IMR-90 (cell line): ENCODE measurements at regions of chr3 and their contacts with region 1.

Region 1: DNA sequence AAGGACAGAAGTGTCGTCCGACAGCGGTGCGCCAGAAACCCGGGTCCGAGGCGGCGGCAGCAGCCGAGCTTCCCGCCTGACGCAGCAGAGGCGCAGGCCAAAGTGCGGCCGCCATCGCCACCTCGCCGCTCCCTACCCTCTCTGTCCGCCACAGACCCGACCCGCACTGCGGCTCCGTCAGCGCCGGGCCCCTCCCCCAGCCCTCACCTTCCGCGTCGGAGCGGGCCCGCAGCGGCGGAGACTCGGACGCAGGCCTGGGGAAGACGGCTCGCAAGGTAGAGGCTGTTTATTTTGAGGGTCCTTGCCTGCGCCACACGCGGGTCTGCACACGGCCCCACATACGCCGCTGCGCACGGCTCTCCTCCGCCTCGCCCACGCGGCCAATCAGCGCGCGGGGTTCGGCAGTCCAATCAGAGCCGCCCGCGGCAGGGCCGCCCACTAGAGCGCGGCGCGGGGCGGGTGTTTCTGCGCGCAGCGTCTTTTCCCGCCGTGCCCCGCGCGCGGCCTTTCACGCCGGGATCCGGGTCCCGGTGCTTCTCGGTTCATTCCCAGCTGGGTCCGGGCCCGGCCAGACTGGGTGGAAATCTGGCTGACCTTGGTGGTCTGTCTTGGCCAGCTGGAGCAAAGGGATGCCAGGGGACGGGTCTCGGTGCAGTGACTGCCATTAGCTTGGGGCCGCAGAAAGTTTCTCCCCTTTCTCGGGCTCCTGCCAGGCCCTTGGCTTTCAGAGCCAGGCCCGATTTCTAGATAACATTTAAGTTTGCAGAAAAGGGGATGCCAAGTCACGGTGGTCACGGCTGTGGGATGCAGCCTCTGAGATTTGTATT is at the start of gene CNBP:
- DNase-seq: peak; percentile 92
- ATAC-seq: peak; percentile 99
- H3K4me3 ChIP-seq: peak within 1 kb of the TSS; percentile 89
- H3K27ac ChIP-seq: peak within 1 kb of the TSS; percentile 94
- H3K4me1 ChIP-seq: peaks cover 5% of the 10 kb centered on the region
- H3K27me3 ChIP-seq: no peaks in the 10 kb centered on the region
- CTCF ChIP-seq: no peak
- POLR2A ChIP-seq: peak; percentile 97
- RAD21 ChIP-seq: no peak
- total RNA-seq, gene CNBP: 223 and 266 TPM in 2 replicates

Region 2: GRCh38 chr3:128910006-128910405 is 273.8 kb before region 1 on chr3:
- CTCF ChIA-PET with region 1: no interaction called
- POLR2A ChIA-PET with region 1: no interaction called
- dilution Hi-C with region 1: no loop called
- in situ Hi-C with region 1: no loop called
- intact Hi-C with region 1: no loop called
- DNase-seq: no peak
- ATAC-seq: no peak
- H3K4me3 ChIP-seq: no peak overlapping the region
- H3K27ac ChIP-seq: no peak overlapping the region
- H3K4me1 ChIP-seq: no peaks in the 10 kb centered on the region
- H3K27me3 ChIP-seq: no peaks in the 10 kb centered on the region
- CTCF ChIP-seq: no peak
- POLR2A ChIP-seq: no peak
- RAD21 ChIP-seq: no peak

Region 3: DNA sequence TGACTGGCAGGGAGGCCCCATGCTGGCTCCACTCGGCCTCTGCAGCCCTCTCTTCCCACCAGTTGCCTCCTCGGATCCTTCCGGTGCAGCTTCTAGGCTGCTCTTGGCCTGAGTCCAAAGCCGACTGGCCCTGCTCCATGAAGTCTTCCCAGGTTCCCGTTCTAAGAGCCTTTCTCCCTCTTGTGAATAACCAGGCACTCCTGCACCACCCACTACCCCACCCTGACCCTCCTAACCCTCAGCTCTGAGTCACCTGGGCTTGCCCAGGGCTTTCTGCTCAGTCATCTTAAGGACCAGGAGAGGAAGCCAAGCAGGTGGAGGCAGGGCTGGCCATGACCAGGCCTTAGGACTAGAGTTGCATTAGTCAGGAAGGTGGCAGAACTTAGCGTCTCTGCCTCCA is 28.0 kb after region 1 on chr3:
- CTCF ChIA-PET with region 1: no interaction called
- POLR2A ChIA-PET with region 1: no interaction called
- dilution Hi-C with region 1: no loop called
- in situ Hi-C with region 1: no loop called
- intact Hi-C with region 1: no loop called
- DNase-seq: peak; percentile 79
- ATAC-seq: peak; percentile 75
- H3K4me3 ChIP-seq: no peak overlapping the region
- H3K27ac ChIP-seq: peak overlapping the region; percentile 58
- H3K4me1 ChIP-seq: peaks cover 8% of the 10 kb centered on the region
- H3K27me3 ChIP-seq: no peaks in the 10 kb centered on the region
- CTCF ChIP-seq: no peak
- POLR2A ChIP-seq: no peak
- RAD21 ChIP-seq: no peak

Region 4: GRCh38 chr3:129224984-129225393 is 41.2 kb after region 1 on chr3:
- CTCF ChIA-PET with region 1: no interaction called
- POLR2A ChIA-PET with region 1: no interaction called
- dilution Hi-C with region 1: no loop called
- in situ Hi-C with region 1: no loop called
- intact Hi-C with region 1: loop called (anchors 5 kb)
- DNase-seq: peak; percentile 69
- ATAC-seq: peak; percentile 68
- H3K4me3 ChIP-seq: peak overlapping the region; percentile 2; the same call in 1 of the 2 replicates
- H3K27ac ChIP-seq: peak overlapping the region; percentile 39
- H3K4me1 ChIP-seq: peaks cover 17% of the 10 kb centered on the region
- H3K27me3 ChIP-seq: no peaks in the 10 kb centered on the region
- CTCF ChIP-seq: no peak
- POLR2A ChIP-seq: no peak
- RAD21 ChIP-seq: no peak